ENCODE measurements at regions of chr1 and their contacts with region 1.

Region 1: DNA sequence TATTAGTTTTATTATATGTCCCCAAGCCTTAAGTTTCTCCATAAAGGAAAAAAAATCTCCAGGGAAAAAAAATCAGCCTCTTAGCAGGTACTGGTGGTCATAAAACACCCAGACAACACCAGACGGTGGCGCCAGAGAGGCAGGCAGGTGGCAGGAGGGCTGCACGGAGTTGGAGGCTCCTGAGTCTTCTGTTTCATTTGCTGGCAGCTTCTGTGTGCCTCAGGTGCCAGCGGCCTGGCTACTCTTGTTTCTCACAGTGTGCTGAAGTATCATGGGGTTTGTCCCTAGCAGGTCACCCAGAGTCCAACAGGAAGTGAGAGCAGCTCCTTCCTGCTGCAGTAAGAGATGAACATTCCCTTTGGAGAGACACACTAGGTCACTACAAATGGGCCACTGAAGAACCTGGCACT is 123.3 kb upstream of the GADD45A start:
- DNase-seq: peak; percentile 98 to 99 (median 98)
- ATAC-seq: peak; percentile 98
- H3K4me3 ChIP-seq: no peak overlapping the region
- H3K27ac ChIP-seq: peak overlapping the region; percentile 66 to 81 (median 72)
- H3K4me1 ChIP-seq: peaks cover 19% of the 10 kb centered on the region
- H3K27me3 ChIP-seq: no peaks in the 10 kb centered on the region
- CTCF ChIP-seq: peak; percentile 82 to 97 (median 95)
- POLR2A ChIP-seq: peak in 2 of 3 donors; percentile 21 to 31

Region 2: DNA sequence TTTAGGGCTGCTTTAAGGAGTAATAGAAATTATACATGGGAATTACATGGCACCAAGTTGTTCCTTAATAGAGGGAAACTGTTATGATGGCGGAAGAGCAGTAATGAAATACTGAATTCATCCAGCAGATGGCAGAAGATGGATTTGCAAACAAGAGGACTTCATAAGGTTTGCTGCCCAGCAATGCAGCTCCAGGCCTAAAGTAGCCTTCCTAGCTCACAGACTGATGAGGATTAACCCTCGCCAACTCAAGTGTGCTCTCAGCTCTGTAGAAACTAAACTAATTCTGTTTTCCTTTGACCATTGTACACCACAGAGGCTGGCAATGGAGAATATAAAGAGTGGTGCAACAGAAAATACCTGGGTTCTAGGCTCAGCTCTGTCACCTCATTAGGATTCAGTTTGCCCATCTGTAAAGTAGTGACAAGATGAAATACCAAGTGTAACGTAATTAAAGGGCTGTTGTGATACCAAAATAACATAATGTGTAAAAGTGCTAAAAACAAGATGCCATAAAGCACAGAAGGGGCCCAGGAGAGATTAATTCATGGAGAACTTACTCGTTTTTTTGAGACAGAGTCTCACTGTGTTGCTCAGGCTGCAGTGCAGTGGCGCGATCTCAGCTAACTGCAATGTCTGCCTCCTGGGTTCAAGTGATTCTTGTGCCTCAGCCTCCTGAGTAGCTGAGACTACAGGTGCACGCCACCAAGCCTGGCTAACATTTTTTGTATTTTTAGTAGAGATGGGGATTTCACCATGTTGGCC is 29.1 kb before region 1 on chr1:
- intact Hi-C with region 1: no loop called
- DNase-seq: peak; percentile 47 to 74 (median 62)
- ATAC-seq: peak; percentile 83
- H3K4me3 ChIP-seq: no peak overlapping the region
- H3K27ac ChIP-seq: no peak overlapping the region
- H3K4me1 ChIP-seq: peaks cover 9% of the 10 kb centered on the region
- H3K27me3 ChIP-seq: no peaks in the 10 kb centered on the region
- CTCF ChIP-seq: peak; percentile 39 to 82 (median 75)
- POLR2A ChIP-seq: no peak

Region 3: DNA sequence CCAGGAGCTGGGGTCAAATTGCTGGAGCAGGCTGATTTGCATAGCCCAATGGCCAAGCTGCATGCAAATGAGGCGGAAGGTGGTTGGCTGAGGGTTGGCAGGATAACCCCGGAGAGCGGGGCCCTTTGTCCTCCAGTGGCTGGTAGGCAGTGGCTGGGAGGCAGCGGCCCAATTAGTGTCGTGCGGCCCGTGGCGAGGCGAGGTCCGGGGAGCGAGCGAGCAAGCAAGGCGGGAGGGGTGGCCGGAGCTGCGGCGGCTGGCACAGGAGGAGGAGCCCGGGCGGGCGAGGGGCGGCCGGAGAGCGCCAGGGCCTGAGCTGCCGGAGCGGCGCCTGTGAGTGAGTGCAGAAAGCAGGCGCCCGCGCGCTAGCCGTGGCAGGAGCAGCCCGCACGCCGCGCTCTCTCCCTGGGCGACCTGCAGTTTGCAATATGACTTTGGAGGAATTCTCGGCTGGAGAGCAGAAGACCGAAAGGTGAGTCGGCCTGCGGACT is 123.4 kb after region 1 on chr1 and contains the start of gene GADD45A:
- intact Hi-C with region 1: loop called (anchors 10 kb)
- DNase-seq: peak; percentile 99 to 100 (median 99)
- ATAC-seq: peak; percentile 90
- H3K4me3 ChIP-seq: peak within 1 kb of the TSS; percentile 34 to 81
- H3K27ac ChIP-seq: peak within 1 kb of the TSS; percentile 88 to 98 (median 94)
- H3K4me1 ChIP-seq: peaks cover 36% of the 10 kb centered on the region
- H3K27me3 ChIP-seq: no peaks in the 10 kb centered on the region
- CTCF ChIP-seq: peak in 1 of 7 experiments; percentile 20
- POLR2A ChIP-seq: peak; percentile 98 to 100 (median 98)
- total RNA-seq, gene GADD45A: 18.5 to 28.3 TPM

Region 4: DNA sequence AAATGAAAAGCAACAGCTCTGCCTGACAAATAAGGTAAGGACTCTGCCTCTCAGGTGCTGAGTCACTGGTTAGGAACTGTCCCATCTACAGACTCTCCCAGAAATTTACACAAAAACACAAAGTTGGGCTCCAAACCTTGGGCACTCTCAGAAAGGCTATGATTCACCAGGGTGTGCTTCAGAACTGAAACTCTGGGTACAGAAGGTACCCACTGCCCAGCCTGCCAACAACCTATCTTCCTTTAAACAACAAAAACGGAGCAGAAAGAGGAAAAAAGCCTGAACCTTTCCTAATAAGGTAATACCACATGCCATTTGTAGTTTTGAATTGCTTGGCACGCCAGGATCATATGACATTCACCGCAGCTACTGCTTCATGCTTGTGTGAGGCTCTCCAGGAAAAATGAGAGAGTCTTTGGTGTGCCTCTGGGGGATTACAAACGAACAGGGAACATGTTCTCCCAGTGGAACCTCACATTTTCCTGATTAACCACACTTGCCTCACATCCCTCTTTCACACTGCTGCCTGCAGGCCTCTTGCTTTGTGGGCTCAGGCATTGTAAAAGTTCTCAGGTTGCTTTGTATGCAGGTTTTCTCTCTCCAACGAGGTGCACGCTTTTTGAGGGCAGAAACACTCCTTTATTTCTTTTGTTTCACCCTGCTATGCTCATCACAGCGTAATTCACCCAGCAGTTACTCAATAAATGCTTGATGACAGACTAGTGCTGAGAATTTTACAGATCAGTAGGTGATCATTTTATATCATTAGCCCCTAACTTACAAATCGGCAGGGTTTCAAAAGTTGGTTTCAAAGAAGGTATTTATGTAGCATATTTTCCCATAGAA is 188.4 kb after region 1 on chr1:
- intact Hi-C with region 1: loop called (anchors 10 kb)
- DNase-seq: peak in 3 of 4 donors; percentile 38 to 54 (median 40)
- ATAC-seq: peak; percentile 73
- H3K4me3 ChIP-seq: no peak overlapping the region
- H3K27ac ChIP-seq: peak overlapping the region; percentile 79 to 85 (median 80)
- H3K4me1 ChIP-seq: peaks cover 37% of the 10 kb centered on the region
- H3K27me3 ChIP-seq: no peaks in the 10 kb centered on the region
- CTCF ChIP-seq: no peak
- POLR2A ChIP-seq: peak in 1 of 3 donors; percentile 23

Measured in body of pancreas (tissue), 4 donors.